Activated CD4-positive, alpha-beta memory T cell treated with anti-CD3 and anti-CD28 coated beads for 36 hours (primary cell): ENCODE measurements at regions of chr12 and their contacts with region 1.

Region 1: DNA sequence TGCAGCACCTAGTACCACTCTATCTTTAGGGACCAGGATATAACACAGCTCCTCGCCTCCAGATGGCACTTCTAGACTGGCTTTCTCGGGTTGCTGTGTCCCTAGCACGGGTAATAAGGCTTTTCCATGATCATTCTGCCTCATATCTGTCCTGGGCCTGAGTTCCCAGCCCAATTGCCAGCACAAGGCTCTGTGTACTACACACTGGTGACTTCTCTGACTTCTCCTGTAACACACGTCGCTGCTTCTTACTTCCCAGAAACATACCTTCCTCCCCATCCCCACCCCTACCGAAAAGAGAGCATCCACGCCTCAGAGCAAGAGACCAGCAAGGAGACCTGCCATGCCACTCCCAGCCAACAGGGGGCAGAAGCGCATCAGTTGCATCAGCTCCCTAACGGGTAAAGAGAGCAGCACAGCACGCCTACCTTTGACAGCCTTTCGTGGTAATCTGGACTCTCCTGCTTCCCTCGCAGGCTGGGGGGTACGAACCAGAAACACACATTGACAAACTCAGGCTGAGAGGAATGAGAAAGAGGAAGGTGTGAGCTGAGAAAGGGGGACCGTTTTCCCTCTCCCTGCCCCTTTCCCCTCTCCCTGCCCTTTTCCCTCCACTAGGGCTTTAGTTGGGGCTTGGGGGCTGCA is 21.2 kb upstream of the ZNF740 start:
- DNase-seq: peak; percentile 95
- H3K4me3 Mint-ChIP-seq: no peak overlapping the region
- H3K27ac Mint-ChIP-seq: no peak overlapping the region
- H3K4me1 Mint-ChIP-seq: peaks cover 6% of the 10 kb centered on the region
- H3K27me3 Mint-ChIP-seq: no peaks in the 10 kb centered on the region

Region 2: DNA sequence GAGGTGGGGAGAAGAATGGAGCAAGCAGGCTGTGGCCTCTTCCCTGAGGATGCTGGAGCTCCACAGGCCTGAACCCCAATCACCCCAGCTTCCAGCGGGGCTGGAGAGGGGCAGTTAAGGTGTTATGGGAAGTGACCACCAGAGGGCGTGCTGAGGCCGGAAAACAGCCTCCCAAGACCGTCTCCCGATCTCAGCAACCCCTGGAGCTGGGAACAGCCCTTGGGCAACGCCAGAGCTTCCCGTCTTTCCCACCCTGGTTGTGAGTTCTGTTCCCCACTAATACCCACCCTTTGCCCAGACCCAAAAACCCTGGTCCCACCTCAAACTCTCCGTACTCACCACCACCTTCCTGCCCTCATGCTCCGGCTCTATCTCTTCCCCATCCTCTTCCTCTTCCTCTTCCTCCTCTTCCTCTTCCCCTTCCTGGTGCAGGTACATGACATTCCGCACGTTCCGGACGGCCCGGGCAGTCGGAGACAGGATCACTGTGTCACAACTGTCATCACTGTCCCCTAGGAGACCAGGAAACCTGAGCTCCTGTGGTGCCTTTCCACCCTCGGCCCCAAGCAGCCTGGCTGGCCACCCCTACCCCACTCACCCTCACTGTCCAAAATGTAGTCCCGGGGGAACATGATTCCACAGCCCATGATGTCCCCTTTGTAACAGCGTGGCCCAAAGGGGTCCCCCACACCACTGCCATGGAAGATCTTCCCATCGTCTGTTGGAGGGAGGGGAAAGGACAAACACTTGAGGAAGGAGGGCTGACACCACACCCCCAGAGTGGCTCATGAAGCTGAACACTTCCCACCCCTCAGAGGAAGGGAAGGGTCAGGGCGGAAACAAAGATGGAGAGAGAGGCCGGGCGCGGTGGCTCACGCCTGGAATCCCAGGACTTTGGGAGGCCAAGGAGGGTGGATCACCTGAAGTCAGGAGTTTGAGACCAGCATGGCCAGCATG is 93.1 kb before region 1 on chr12:
- CTCF ChIA-PET with region 1: interaction called, 11 read pairs
- POLR2A ChIA-PET with region 1: no interaction called
- intact Hi-C with region 1: no loop called
- DNase-seq: peak; percentile 76
- H3K4me3 Mint-ChIP-seq: no peak overlapping the region
- H3K27ac Mint-ChIP-seq: no peak overlapping the region
- H3K4me1 Mint-ChIP-seq: peaks cover 8% of the 10 kb centered on the region
- H3K27me3 Mint-ChIP-seq: no peaks in the 10 kb centered on the region

Region 3: DNA sequence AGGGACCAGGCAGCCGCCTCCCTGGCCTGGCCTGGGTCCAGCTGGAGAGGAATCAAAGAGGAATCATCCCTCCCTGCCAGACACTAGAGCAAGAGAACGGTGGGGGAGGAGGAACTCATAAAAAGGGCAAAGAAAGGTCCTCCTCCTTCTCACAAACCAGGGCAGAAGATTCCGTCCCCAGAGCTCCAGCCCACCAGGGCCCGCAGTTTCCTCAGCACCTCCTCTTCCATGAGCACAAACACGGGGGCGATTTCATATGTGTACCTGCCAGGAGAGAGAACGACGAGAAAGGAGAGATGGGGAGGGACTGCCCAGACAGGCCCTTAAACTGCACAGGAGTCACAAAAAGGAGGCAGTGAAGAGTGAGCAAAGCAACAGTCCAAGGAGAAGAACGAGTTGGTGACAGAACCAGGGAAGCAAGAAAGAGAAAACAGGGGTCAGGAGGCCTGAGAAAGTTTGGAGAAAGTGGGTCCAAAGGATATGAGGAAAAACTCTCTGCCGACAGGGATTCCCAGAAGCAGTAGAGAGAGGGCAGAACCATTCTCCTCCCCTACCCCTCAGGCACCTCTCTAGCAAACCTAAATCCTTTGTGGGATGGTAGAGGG is 12.5 kb after region 1 on chr12:
- CTCF ChIA-PET with region 1: interaction called, 13 read pairs
- POLR2A ChIA-PET with region 1: no interaction called
- intact Hi-C with region 1: no loop called
- DNase-seq: no peak
- H3K4me3 Mint-ChIP-seq: no peak overlapping the region
- H3K27ac Mint-ChIP-seq: no peak overlapping the region
- H3K4me1 Mint-ChIP-seq: peaks cover 3% of the 10 kb centered on the region
- H3K27me3 Mint-ChIP-seq: no peaks in the 10 kb centered on the region

Region 4: GRCh38 chr12:53190108-53190729 is 30.9 kb after region 1 on chr12:
- CTCF ChIA-PET with region 1: interaction called, 53 read pairs
- POLR2A ChIA-PET with region 1: no interaction called
- intact Hi-C with region 1: loop called (anchors 1 kb)
- DNase-seq: peak; percentile 62
- H3K4me3 Mint-ChIP-seq: no peak overlapping the region
- H3K27ac Mint-ChIP-seq: peak overlapping the region; percentile 72
- H3K4me1 Mint-ChIP-seq: peaks cover 6% of the 10 kb centered on the region
- H3K27me3 Mint-ChIP-seq: no peaks in the 10 kb centered on the region

Region 5: GRCh38 chr12:53205747-53206419 is 46.6 kb after region 1 on chr12:
- CTCF ChIA-PET with region 1: interaction called, 28 read pairs
- POLR2A ChIA-PET with region 1: interaction called, 3 read pairs
- intact Hi-C with region 1: loop called (anchors 2 kb)
- DNase-seq: peak; percentile 92
- H3K4me3 Mint-ChIP-seq: peak overlapping the region; percentile 84
- H3K27ac Mint-ChIP-seq: peak overlapping the region; percentile 83
- H3K4me1 Mint-ChIP-seq: peaks cover 77% of the 10 kb centered on the region
- H3K27me3 Mint-ChIP-seq: no peaks in the 10 kb centered on the region

Region 6: DNA sequence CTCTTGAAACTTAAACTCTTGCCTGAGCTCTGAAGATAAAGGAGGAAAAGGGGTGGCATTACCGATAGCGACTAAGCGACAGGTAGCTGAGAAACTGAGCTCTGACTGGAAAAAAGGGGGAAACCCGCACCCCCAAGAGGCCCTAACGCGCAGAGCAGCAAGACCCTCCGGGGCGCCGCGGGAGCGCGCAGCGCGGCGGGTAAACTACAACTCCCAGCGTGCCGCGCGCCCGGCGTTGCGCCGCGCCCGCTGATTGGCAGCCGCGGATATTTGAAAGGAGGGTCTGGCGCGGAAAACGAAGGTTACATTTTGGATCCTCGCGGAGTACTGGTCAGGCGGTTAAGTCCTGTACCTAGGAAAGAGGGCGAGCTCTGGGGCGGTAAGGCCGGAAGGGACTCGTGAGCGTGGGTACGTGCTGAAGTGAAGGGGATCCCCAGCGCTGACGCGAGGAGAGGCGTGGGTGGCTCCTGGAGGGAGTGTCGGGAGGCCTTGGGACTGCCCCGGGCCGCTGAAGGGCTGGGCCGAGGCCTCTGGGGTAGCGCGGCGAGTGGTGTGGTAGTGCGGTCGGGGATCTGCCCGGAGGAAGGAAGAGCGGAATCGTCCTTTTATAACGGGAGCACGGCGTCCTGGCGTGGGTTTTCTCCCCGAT is 108.8 kb after region 1 on chr12 and contains the start of gene ESPL1:
- CTCF ChIA-PET with region 1: interaction called, 37 read pairs
- POLR2A ChIA-PET with region 1: interaction called, 4 read pairs
- intact Hi-C with region 1: no loop called
- DNase-seq: peak; percentile 93
- H3K4me3 Mint-ChIP-seq: peak within 1 kb of the TSS; percentile 97
- H3K27ac Mint-ChIP-seq: peak within 1 kb of the TSS; percentile 95
- H3K4me1 Mint-ChIP-seq: peaks cover 36% of the 10 kb centered on the region
- H3K27me3 Mint-ChIP-seq: no peaks in the 10 kb centered on the region
- total RNA-seq, gene ESPL1: 70.0 to 77.2 TPM

Region 7: DNA sequence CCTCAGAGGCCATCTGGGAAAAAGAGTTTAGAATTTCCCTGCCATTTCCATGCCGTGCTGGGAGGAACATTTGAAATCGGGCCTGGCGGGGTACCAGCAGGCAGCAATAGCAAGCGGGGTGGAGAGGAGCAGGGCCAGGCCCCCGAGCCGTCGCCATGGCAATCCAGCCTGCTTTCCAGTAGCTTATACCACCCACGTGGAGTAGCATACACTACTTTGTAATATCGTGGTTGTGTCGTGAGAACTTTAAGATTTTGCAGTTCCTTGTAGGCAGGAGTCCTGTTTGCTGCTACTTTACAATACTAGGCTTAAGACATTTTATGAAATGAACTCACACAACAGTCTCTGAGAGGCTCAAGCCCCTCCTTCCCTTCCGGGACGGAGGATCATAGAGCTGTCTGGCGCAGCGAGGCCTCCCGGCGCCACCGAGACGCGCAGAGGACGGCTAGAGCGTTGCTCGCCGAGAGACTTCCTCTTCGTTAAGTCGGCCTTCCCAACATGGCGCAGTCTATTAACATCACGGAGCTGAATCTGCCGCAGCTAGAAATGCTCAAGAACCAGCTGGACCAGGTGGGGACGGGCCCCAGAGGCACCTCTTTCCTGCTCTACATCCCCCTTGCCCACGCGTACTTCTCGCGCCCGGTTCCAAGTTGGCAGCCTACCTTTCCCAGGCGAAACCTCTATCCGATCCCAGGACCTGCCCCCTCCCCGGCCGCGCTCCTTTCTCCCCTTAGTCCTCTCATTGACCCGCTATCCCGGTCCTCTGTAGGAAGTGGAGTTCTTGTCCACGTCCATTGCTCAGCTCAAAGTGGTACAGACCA is 136.0 kb after region 1 on chr12 and contains the start of gene PFDN5:
- CTCF ChIA-PET with region 1: interaction called, 34 read pairs
- POLR2A ChIA-PET with region 1: no interaction called
- intact Hi-C with region 1: loop called (anchors 2 kb)
- DNase-seq: peak; percentile 92
- H3K4me3 Mint-ChIP-seq: peak within 1 kb of the TSS; percentile 99
- H3K27ac Mint-ChIP-seq: peak within 1 kb of the TSS; percentile 94
- H3K4me1 Mint-ChIP-seq: peaks cover 53% of the 10 kb centered on the region
- H3K27me3 Mint-ChIP-seq: no peaks in the 10 kb centered on the region
- total RNA-seq, gene PFDN5: 354 to 359 TPM